Gastrocnemius medialis (tissue), 4 donors: ENCODE measurements at regions of chr7 and their contacts with region 1.

Region 1: DNA sequence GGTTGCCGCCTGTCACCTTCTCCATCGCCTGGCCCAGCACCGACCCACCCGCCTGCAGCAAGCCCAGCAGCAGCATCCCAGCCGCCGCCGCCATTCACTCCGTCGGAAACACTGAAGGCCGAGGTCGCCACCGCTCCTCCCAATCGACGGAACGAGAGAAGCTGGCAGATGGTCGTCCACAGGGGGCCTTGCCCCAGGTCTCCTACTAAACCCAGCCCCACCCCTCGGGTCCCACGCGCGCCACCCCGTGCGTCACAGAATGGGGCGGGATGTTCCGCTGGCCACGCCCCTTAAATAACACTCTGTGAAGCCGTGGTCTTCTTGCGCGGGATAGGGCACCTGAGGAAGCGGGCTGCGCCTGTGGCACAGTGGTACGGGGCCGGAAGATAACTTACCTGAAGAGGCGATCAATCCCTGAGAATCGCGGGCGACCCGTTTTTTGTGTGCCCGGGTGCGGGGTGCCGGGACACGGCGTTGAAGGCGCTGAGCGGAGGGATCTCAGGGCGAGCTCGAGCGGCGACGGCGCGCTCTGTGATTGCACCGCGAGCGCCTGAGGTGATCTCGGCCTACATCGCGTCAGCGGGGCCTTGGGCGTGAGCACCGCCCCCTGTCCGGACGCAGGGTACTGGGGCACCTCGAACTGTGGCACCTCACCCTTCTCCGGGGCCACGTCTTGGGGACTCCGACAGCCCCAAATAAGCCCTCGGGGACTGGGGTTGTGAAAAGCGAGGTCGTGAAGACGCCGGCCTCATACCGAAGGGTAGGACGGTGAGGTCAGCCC is at the start of gene CYP51A1:
- DNase-seq: peak; percentile 78 to 86
- ATAC-seq: peak; percentile 93
- H3K4me3 ChIP-seq: peak within 1 kb of the TSS; percentile 71 to 92 (median 90)
- H3K27ac ChIP-seq: peak within 1 kb of the TSS; percentile 78 to 92 (median 89)
- H3K4me1 ChIP-seq: peaks cover 5 to 8% of the 10 kb centered on the region in 2 donors
- H3K27me3 ChIP-seq: no peaks in the 10 kb centered on the region
- CTCF ChIP-seq: no peak
- POLR2A ChIP-seq: peak; percentile 71 to 74
- total RNA-seq, gene CYP51A1: 4.7 to 13.3 (median 9.7) TPM

Region 2: DNA sequence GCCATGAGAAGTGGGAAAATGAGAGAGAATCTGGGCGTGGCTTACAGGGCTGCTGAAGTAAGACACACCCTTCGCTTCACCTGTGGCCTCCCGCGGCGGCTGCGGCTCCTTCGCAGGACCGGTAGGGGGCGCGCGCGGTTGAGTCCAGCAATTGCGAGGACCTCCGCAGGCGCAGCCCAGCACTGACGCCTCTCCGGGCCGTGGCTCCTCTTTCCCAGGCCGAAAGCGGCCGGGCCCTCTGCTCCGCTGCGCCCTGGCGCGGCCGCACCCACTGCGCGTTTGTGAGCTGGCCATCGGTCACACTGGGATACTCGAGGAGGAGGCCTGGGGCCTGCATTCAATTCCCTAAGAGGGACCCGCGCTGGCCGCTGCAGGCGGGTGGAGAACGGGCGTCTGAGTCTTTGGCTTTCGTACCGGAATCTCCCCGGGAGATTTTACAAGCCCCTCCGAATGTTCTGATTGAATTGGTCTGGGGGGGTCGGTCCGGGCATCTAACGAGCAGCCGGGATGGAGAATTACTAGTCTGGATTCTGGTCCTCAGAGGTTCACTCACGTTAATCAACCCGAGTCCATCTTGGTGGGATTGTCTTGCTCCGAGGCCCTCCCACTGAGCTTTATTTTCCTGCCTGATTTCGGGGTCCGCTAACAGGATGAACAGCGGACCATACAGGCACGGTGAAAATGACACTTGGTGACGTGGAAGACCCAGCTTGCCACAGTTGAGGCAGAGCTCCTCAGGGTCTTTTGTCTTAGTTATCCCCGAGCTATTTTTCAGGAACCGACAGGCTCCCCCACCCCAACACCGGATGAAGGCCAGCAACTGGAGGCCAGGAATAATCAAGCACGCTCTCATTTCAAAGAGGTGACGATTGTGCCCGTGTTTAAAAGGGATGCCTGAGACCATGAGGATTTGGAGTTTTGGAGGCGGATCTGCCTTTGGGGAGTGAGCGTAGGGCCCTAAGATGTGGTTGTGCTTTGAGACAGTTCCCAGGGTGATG is 44.8 kb after region 1 on chr7 and contains the start of gene LRRD1:
- in situ Hi-C with region 1: no loop called
- intact Hi-C with region 1: loop called (anchors 2 kb)
- DNase-seq: peak; percentile 47 to 77
- ATAC-seq: peak; percentile 94 to 99
- H3K4me3 ChIP-seq: peak within 1 kb of the TSS; percentile 59 to 69 (median 62)
- H3K27ac ChIP-seq: peak within 1 kb of the TSS; percentile 52 to 76 (median 61)
- H3K4me1 ChIP-seq: no peaks in the 10 kb centered on the region
- H3K27me3 ChIP-seq: no peaks in the 10 kb centered on the region
- CTCF ChIP-seq: peak; percentile 77 to 99 (median 86)
- POLR2A ChIP-seq: no peak
- total RNA-seq, gene LRRD1: not detected